ENCODE measurements at regions of chr14 and their contacts with region 1.

Region 1: GRCh38 chr14:24188251-24189058 is at the start of gene IPO4:
- DNase-seq: peak; percentile 81
- ATAC-seq: peak; percentile 92
- H3K4me3 Mint-ChIP-seq: peak within 1 kb of the TSS; percentile 91
- H3K27ac Mint-ChIP-seq: peak within 1 kb of the TSS; percentile 87
- H3K4me1 Mint-ChIP-seq: peaks cover 32% of the 10 kb centered on the region
- H3K27me3 Mint-ChIP-seq: no peaks in the 10 kb centered on the region
- CTCF ChIP-seq: no peak
- total RNA-seq, gene IPO4: 76.4 and 80.3 TPM in 2 replicates

Region 2: DNA sequence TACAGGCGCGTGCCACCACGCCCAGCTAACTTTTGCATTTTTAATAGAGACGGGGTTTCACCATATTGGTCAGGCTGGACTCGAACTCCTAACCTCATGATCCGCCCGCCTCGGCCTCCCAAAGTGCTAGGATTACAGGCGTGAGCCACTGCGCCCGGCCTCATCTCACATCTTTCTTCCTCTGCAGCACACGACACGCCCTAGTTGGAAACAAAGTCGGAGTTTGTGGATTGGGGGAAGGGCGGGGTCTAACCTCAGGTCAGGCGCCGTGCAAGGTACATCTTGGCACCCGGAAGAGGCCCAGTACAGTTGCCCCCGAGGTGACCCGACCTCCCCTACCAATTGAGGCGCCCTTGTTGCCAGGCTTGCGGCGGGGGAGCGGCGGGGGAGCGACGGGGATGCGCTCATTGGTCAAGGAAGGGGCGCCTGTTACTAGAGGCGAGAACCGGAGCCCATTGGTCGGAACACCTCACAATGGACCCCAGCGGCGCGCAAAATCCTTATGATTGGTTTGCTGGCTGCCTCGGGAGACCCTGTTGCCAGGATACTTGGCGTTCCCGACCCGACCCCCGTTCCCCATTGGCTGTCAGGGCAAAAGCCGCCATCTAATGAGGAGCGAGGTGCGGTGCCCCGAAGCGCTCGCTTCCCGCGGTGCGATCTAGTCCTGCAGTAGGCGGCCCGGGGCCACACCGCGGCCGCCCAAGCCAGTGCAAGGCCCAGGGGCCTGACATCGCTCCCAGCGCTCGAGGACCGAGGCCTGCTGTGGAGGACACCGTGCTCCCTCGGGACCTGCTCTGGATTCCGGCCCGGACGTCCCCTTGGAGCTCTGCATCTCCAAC is 16.8 kb before region 1 on chr14 and contains the start of gene REC8:
- CTCF ChIA-PET with region 1: no interaction called
- POLR2A ChIA-PET with region 1: interaction called, 5 read pairs
- intact Hi-C with region 1: loop called (anchors 1 kb)
- DNase-seq: peak; percentile 68
- ATAC-seq: peak; percentile 91
- H3K4me3 Mint-ChIP-seq: peak within 1 kb of the TSS; percentile 90
- H3K27ac Mint-ChIP-seq: peak within 1 kb of the TSS; percentile 84
- H3K4me1 Mint-ChIP-seq: peaks cover 25% of the 10 kb centered on the region
- H3K27me3 Mint-ChIP-seq: no peaks in the 10 kb centered on the region
- CTCF ChIP-seq: no peak
- total RNA-seq, gene REC8: 27.0 and 35.3 TPM in 2 replicates

Region 3: DNA sequence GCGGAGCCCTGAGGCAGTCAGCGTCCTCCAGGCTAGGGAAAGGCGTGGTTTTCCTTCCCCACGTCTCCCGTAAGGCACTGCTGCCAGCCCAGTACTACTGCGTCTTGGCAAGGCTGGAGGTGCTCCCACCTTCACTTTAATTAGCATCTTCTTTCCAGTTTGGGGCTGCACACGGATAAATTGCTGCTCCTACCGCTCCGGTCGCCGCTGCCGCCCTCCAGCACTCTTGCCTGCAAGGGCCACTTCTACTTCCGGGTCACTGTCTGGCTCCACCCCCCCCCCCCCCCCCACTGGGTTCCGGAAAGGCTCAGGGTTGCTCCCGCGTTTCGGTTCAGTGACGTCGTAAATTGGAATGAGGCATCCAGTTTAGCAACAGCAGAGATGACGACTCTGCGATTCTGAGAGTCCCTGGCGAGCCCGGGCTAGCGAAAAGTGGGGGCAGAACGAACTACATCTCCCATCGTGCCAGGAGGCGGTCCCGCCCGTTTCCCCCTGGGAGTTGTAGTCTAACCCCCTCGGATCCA is 43.7 kb after region 1 on chr14 and contains the start of gene NEDD8:
- CTCF ChIA-PET with region 1: no interaction called
- POLR2A ChIA-PET with region 1: interaction called, 10 read pairs
- intact Hi-C with region 1: loop called (anchors 1 kb)
- DNase-seq: no peak
- ATAC-seq: peak; percentile 88
- H3K4me3 Mint-ChIP-seq: peak within 1 kb of the TSS; percentile 99
- H3K27ac Mint-ChIP-seq: peak within 1 kb of the TSS; percentile 94
- H3K4me1 Mint-ChIP-seq: peaks cover 43% of the 10 kb centered on the region
- H3K27me3 Mint-ChIP-seq: no peaks in the 10 kb centered on the region
- CTCF ChIP-seq: no peak
- total RNA-seq, gene NEDD8: 129 and 149 TPM in 2 replicates

Measured in activated B cell treated with CpG ODN at 0.5 μM for 24 hours (primary cell).